ENCODE measurements at regions of chr2 and their contacts with region 1.

Region 1: GRCh38 chr2:120949027-120949956 is 213.6 kb downstream of the GLI2 start:
- DNase-seq: peak; percentile 40
- ATAC-seq: peak; percentile 83
- H3K4me3 ChIP-seq: no peak overlapping the region
- H3K27ac ChIP-seq: no peak overlapping the region
- H3K4me1 ChIP-seq: no peaks in the 10 kb centered on the region
- H3K27me3 ChIP-seq: peaks cover 8 to 61% of the 10 kb centered on the region in 2 experiments; a peak in 3 of 5 replicates
- CTCF ChIP-seq: peak; percentile 77
- EP300 ChIP-seq: no peak
- POLR2A ChIP-seq: no peak
- RAD21 ChIP-seq: peak; percentile 69

Region 2: GRCh38 chr2:120499784-120500495 is 449.4 kb before region 1 on chr2:
- CTCF ChIA-PET with region 1: no interaction called
- POLR2A ChIA-PET with region 1: no interaction called
- in situ Hi-C with region 1: no loop called
- intact Hi-C with region 1: no loop called
- DNase-seq: peak; percentile 66
- ATAC-seq: peak; percentile 38
- H3K4me3 ChIP-seq: no peak overlapping the region
- H3K27ac ChIP-seq: no peak overlapping the region
- H3K4me1 ChIP-seq: peaks cover 57% of the 10 kb centered on the region
- H3K27me3 ChIP-seq: peaks cover 0 to 64% of the 10 kb centered on the region in 2 experiments; a peak in 4 of 5 replicates
- CTCF ChIP-seq: no peak; the same call in 1 of the 2 replicates
- EP300 ChIP-seq: no peak; a peak in 1 of 4 replicates
- POLR2A ChIP-seq: no peak
- RAD21 ChIP-seq: no peak

Region 3: DNA sequence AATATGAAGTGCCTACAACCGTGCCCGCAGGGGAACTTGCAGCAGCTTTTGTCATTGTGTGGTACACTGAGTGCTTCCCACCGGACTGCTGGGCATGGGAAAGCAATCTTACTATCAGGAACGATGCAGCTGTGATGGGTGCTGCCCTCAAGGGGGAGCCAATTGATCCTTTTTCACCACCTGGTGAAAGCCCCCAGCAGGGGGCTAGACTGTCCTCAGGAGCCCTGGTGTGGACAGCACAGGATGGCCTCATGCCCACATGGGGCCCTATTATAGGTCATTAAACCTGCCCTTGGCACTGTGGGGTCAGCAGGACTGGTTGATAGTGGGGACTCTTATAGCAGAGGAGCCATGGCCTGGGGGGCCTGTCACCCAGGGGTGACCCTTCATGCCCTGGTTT is 41.5 kb before region 1 on chr2:
- CTCF ChIA-PET with region 1: interaction called, 5 read pairs
- POLR2A ChIA-PET with region 1: no interaction called
- in situ Hi-C with region 1: loop called (anchors 5 kb)
- intact Hi-C with region 1: loop called (anchors 5 kb)
- DNase-seq: peak; percentile 40
- ATAC-seq: peak; percentile 61
- H3K4me3 ChIP-seq: no peak overlapping the region
- H3K27ac ChIP-seq: no peak overlapping the region
- H3K4me1 ChIP-seq: no peaks in the 10 kb centered on the region
- H3K27me3 ChIP-seq: peaks cover 0 to 39% of the 10 kb centered on the region in 2 experiments; a peak in 4 of 5 replicates
- CTCF ChIP-seq: peak; percentile 46
- EP300 ChIP-seq: no peak
- POLR2A ChIP-seq: no peak
- RAD21 ChIP-seq: peak; percentile 36; the same call in 1 of the 2 replicates